ENCODE measurements at regions of chr3 and their contacts with region 1.

Region 1: DNA sequence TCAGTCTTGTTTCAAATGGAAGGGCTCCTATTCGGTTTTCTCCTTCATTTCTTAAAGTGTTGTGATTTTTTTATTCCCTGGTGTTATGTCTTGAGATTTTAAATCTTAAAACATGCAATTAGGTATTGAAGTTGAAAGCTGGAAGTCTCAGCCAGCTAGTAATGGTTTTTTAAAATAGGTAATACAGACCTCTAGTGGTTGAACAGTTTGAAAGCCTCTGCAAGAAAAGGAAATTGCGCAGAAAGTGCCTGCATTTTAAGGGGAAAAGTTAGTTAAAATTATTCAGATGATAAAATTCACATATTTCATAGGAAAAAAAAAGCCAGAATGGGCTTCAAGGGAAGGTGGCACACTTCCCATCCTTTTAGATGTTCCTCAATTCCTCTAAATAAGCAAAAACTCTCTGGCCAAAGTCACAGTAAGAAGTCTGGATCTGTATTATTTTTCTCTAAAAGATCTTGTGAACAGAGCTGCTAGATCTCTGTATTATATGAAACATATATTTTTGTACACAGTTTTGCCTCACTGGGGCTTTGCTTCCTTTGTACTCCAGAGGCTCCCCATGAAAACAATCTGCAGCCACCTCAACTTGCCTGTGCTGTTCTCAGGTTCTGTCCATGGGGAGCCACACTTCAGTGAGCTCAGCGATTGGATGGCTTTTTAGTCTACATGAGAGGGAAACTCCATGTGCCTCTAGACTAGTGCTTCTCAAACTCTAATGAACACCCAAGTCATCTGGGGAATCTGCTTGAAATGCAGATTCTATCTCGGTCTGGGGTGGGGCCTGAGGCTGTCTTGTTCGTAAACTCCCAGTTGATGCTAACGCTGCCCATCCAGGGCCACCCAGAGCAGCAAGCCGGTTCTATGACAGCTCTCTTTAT is 21.5 kb downstream of the AGTR1 start:
- H3K4me3 ChIP-seq: no peak overlapping the region
- H3K27ac ChIP-seq: no peak overlapping the region
- H3K4me1 ChIP-seq: no peaks in the 10 kb centered on the region
- CTCF ChIP-seq: no peak

Region 2: GRCh38 chr3:148379763-148380382 is 339.3 kb before region 1 on chr3:
- CTCF ChIA-PET with region 1: interaction called, 13 read pairs
- POLR2A ChIA-PET with region 1: no interaction called
- H3K4me3 ChIP-seq: no peak overlapping the region
- H3K27ac ChIP-seq: no peak overlapping the region
- H3K4me1 ChIP-seq: no peaks in the 10 kb centered on the region
- CTCF ChIP-seq: peak; percentile 35; the same call in 1 of the 2 replicates

Region 3: DNA sequence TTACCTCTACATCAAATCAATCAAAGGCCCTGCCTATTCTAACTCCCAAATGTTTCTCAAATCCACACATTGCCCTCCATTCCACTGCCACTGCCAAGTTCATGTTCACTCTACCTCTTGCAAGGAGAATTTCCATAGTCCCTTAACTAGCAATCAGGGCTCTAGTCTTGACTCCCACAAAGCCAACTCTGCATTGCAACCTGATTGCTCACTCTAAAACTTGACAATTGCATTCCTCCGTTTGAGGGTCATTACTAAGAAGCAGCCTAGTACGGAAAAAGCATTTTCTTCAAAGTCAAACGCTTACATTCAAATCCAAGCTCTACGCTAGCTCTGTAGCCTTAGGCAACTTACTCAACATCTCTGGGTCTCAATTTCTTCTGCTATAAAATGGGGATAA is 147.0 kb after region 1 on chr3:
- CTCF ChIA-PET with region 1: no interaction called
- POLR2A ChIA-PET with region 1: no interaction called
- H3K4me3 ChIP-seq: no peak overlapping the region
- H3K27ac ChIP-seq: no peak overlapping the region
- H3K4me1 ChIP-seq: no peaks in the 10 kb centered on the region
- CTCF ChIP-seq: no peak

Region 4: GRCh38 chr3:149129326-149130205 is 410.3 kb after region 1 on chr3 and contains the start of gene HPS3:
- CTCF ChIA-PET with region 1: no interaction called
- POLR2A ChIA-PET with region 1: no interaction called
- H3K4me3 ChIP-seq: peak within 1 kb of the TSS; percentile 99
- H3K27ac ChIP-seq: peak within 1 kb of the TSS; percentile 56; the same call in 1 of the 2 replicates
- H3K4me1 ChIP-seq: peaks cover 7% of the 10 kb centered on the region; the same call in 1 of the 2 replicates
- CTCF ChIP-seq: peak; percentile 9; the same call in 1 of the 2 replicates

Measured in HEK293 (cell line).